ENCODE measurements at regions of chr4 and their contacts with region 1.

Region 1: GRCh38 chr4:15681207-15682015 is at the start of gene FAM200B:
- DNase-seq: peak; percentile 99
- ATAC-seq: peak; percentile 99
- H3K4me3 Mint-ChIP-seq: peak within 1 kb of the TSS; percentile 99
- H3K27ac Mint-ChIP-seq: peak within 1 kb of the TSS; percentile 97
- H3K4me1 Mint-ChIP-seq: peaks cover 37% of the 10 kb centered on the region
- H3K27me3 Mint-ChIP-seq: no peaks in the 10 kb centered on the region
- total RNA-seq, gene FAM200B: 15.8 to 17.2 TPM

Region 2: GRCh38 chr4:15655229-15656037 is 26.0 kb before region 1 on chr4 and contains the start of gene FBXL5:
- CTCF ChIA-PET with region 1: interaction called, 9 read pairs
- POLR2A ChIA-PET with region 1: interaction called, 13 read pairs
- DNase-seq: peak; percentile 82
- ATAC-seq: peak; percentile 82
- H3K4me3 Mint-ChIP-seq: peak within 1 kb of the TSS; percentile 96
- H3K27ac Mint-ChIP-seq: peak within 1 kb of the TSS; percentile 97
- H3K4me1 Mint-ChIP-seq: peaks cover 42% of the 10 kb centered on the region
- H3K27me3 Mint-ChIP-seq: no peaks in the 10 kb centered on the region
- total RNA-seq, gene FBXL5: 40.9 to 42.0 TPM